GM10248 (cell line): ENCODE measurements at regions of chr4 and their contacts with region 1.

Region 1: GRCh38 chr4:84666439-84666838 is 83.5 kb downstream of the CDS1 start:
- DNase-seq: no peak
- CTCF ChIP-seq: no peak

Region 2: GRCh38 chr4:84651499-84651898 is 14.9 kb before region 1 on chr4:
- CTCF ChIA-PET with region 1: interaction called, 13 read pairs
- POLR2A ChIA-PET with region 1: no interaction called
- DNase-seq: no peak
- CTCF ChIP-seq: no peak

Region 3: GRCh38 chr4:84924420-84924819 is 258.0 kb after region 1 on chr4:
- CTCF ChIA-PET with region 1: no interaction called
- POLR2A ChIA-PET with region 1: no interaction called
- DNase-seq: no peak
- CTCF ChIP-seq: no peak